Ovary (tissue), 10 donors: ENCODE measurements at regions of chr15 and their contacts with region 1.

Region 1: GRCh38 chr15:42046579-42046978 is 25.7 kb upstream of the PLA2G4E start:
- DNase-seq: no peak
- H3K4me3 ChIP-seq: no peak overlapping the region
- H3K27ac ChIP-seq: no peak overlapping the region
- H3K4me1 ChIP-seq: peaks cover 5% of the 10 kb centered on the region
- H3K27me3 ChIP-seq: no peaks in the 10 kb centered on the region
- CTCF ChIP-seq: no peak
- EP300 ChIP-seq: no peak
- POLR2A ChIP-seq: no peak

Region 2: GRCh38 chr15:41999290-42000285 is 47.0 kb before region 1 on chr15:
- intact Hi-C with region 1: loop called in 1 of 4 experiments (anchors 2 kb)
- DNase-seq: no peak
- H3K4me3 ChIP-seq: no peak overlapping the region
- H3K27ac ChIP-seq: no peak overlapping the region
- H3K4me1 ChIP-seq: no peaks in the 10 kb centered on the region
- H3K27me3 ChIP-seq: no peaks in the 10 kb centered on the region
- CTCF ChIP-seq: no peak
- EP300 ChIP-seq: no peak
- POLR2A ChIP-seq: no peak